ENCODE measurements at regions of chr11 and their contacts with region 1.

Region 1: DNA sequence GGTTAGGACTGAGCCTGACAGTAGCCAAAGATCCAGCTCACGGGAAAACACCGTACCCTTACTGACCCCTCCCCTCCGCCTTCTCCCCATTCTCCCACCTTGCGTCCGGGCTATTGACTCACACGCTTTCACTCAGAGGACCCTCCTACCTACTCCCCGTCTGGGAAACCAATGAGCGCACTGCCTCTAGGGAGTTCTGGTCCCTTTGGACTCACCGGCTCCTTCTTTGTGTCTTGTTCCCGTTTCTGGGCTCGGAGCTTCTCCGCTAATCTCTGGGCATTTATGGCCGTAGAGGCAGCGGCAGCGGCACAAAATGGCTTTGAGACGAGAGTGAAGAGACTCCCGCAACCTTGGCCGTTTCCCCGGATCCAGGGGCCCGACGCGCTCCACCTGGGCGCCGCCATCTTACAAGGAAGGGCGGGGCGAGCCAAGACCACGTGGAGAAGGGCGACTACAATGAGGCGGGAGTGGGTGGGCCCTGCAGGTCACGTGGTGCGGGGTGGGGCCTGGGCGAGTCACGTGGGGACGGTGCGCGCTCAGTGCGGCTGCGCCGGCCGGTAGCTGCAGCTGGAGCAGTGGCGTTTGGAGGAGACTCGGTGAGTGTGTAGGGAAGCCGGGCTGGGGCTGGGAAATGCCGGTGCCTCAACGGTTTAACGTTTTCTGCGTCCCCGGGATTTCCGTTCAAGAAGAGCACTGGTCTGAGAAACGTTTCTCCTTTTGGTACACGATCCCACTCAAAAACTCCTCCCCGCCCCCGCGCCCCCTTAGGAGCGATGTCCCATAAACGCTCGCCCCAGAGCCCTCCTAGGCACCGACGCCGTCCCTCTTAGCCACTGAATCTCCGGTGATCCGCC is at the starts of genes FAM118B and RPUSD4:
- DNase-seq: peak; percentile 97
- ATAC-seq: peak; percentile 96
- H3K4me3 ChIP-seq: peak within 1 kb of the TSS; percentile 89 to 100 (median 99)
- H3K4me3 Mint-ChIP-seq: peak within 1 kb of the TSS; percentile 99
- H3K27ac ChIP-seq: peak within 1 kb of the TSS; percentile 72 to 86
- H3K27ac Mint-ChIP-seq: peak within 1 kb of the TSS; percentile 95
- H3K4me1 ChIP-seq: peaks cover 16 to 18% of the 10 kb centered on the region in 2 donors
- H3K4me1 Mint-ChIP-seq: peaks cover 29% of the 10 kb centered on the region
- H3K27me3 ChIP-seq: no peaks in the 10 kb centered on the region
- H3K27me3 Mint-ChIP-seq: no peaks in the 10 kb centered on the region
- CTCF ChIP-seq: no peak
- total RNA-seq, gene FAM118B: 12.8 and 14.1 TPM in 2 replicates
- total RNA-seq, gene RPUSD4: 48.8 and 50.4 TPM in 2 replicates

Region 2: GRCh38 chr11:125592305-125593112 is 619.0 kb before region 1 on chr11 and contains the start of gene STT3A:
- CTCF ChIA-PET with region 1: no interaction called
- POLR2A ChIA-PET with region 1: no interaction called
- intact Hi-C with region 1: loop called (anchors 1 kb)
- DNase-seq: peak; percentile 99
- ATAC-seq: peak; percentile 92
- H3K4me3 ChIP-seq: peak within 1 kb of the TSS; percentile 72 to 97 (median 84)
- H3K4me3 Mint-ChIP-seq: peak within 1 kb of the TSS; percentile 94
- H3K27ac ChIP-seq: peak within 1 kb of the TSS; percentile 94 to 95
- H3K27ac Mint-ChIP-seq: peak within 1 kb of the TSS; percentile 97
- H3K4me1 ChIP-seq: peaks cover 27 to 28% of the 10 kb centered on the region in 2 donors
- H3K4me1 Mint-ChIP-seq: peaks cover 41% of the 10 kb centered on the region
- H3K27me3 ChIP-seq: no peaks in the 10 kb centered on the region
- H3K27me3 Mint-ChIP-seq: no peaks in the 10 kb centered on the region
- CTCF ChIP-seq: no peak
- total RNA-seq, gene STT3A: 76.1 and 78.4 TPM in 2 replicates

Region 3: DNA sequence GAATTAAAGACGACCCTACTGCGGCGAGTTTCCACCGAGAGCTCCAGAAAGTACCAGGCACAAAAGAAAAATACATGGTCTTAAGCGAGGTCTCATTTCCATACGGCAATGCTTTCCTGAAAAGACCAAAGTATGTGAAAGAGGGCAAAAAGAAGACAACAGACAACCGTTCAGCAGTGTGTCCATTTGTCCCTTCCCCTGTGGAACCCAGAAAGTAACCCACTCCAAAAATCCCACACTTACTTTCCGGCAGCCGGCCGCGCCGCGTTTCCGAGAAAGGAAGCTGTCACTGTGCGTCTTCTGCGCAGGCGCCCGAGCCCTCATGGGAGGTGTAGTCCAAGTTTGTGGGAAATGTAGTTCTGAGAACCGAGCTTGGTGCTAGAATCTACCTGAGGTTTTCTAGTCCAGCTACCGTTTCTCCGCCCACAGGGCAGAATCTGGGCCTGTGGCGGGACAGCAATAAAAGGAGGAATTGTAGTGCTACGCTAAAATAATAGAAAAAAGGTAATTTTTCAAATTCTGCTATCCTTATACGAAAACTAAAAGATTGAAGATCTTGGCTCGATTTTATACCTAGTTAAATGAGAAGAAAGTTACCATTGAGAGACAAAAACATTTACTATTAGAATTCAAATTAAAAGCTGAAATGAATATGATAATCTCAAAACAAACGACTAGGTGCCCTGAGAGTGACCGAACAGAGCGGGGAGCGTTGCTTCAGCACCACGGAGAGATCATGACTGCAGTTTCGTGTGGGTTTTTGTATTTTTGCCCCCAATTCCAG is 308.3 kb before region 1 on chr11 and contains the start of gene PUS3:
- CTCF ChIA-PET with region 1: no interaction called
- POLR2A ChIA-PET with region 1: no interaction called
- intact Hi-C with region 1: loop called (anchors 2 kb)
- DNase-seq: peak; percentile 89
- ATAC-seq: peak; percentile 96
- H3K4me3 ChIP-seq: peak within 1 kb of the TSS; percentile 67 to 98 (median 81)
- H3K4me3 Mint-ChIP-seq: peak within 1 kb of the TSS; percentile 97
- H3K27ac ChIP-seq: peak within 1 kb of the TSS; percentile 45 to 75
- H3K27ac Mint-ChIP-seq: peak within 1 kb of the TSS; percentile 82
- H3K4me1 ChIP-seq: peaks cover 23 to 26% of the 10 kb centered on the region in 2 donors
- H3K4me1 Mint-ChIP-seq: peaks cover 24% of the 10 kb centered on the region
- H3K27me3 ChIP-seq: peaks cover 0 to 25% (median 18%) of the 10 kb centered on the region in 4 experiments
- H3K27me3 Mint-ChIP-seq: peaks cover 32% of the 10 kb centered on the region
- CTCF ChIP-seq: no peak
- total RNA-seq, gene PUS3: 7.8 and 8.1 TPM in 2 replicates

Region 4: DNA sequence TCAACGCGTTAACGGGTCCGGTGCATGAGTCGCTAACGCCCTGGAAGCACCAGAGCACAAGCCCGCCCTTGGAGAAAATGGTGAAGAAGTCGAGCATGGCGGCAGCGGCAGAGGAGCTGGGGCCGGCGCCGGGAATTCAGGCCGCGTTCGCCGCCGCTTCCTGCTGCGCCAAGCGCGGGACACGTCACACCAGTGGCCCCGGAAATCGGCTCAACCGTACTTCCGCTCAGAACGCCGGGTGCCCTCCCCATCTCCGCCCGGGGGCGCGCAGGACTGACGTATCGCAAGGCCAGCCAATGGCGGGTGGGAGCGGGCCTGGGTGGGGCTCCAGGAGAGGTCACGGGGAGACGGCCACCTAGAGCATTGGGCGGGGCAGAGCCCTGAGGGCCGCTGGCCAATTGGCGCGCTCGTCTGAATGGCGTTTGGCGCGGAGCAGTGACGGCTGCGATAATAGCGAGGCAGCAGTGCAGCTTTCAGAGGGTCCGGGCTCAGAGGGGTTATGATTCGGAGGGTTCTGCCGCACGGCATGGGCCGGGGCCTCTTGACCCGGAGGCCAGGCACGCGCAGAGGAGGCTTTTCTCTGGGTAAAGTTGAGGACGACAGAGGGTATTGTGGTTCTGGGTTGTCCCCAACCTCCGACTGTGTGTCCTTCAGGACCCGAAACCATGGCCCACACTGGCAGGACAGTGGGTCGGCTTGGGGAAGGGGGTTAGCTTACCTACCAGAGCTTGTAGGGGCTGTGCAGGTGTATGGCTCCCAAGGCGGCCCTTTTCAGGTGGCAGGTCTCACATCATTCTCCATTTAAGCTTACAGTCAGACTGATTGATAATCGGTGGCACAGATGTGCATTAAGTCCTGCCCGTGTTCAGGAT is 57.5 kb after region 1 on chr11 and contains the starts of genes FOXRED1 and SRPRA:
- CTCF ChIA-PET with region 1: no interaction called
- POLR2A ChIA-PET with region 1: interaction called, 5 read pairs
- intact Hi-C with region 1: loop called (anchors 1 kb)
- DNase-seq: peak; percentile 99
- ATAC-seq: peak; percentile 99
- H3K4me3 ChIP-seq: peak within 1 kb of the TSS; percentile 83 to 98 (median 89)
- H3K4me3 Mint-ChIP-seq: peak within 1 kb of the TSS; percentile 96
- H3K27ac ChIP-seq: peak within 1 kb of the TSS; percentile 94 to 95
- H3K27ac Mint-ChIP-seq: peak within 1 kb of the TSS; percentile 93
- H3K4me1 ChIP-seq: peaks cover 14 to 20% of the 10 kb centered on the region in 2 donors
- H3K4me1 Mint-ChIP-seq: peaks cover 36% of the 10 kb centered on the region
- H3K27me3 ChIP-seq: no peaks in the 10 kb centered on the region
- H3K27me3 Mint-ChIP-seq: no peaks in the 10 kb centered on the region
- CTCF ChIP-seq: no peak
- total RNA-seq, gene FOXRED1: 44.4 and 46.0 TPM in 2 replicates
- total RNA-seq, gene SRPRA: 129 and 136 TPM in 2 replicates

Region 5: GRCh38 chr11:126303623-126304456 is 92.4 kb after region 1 on chr11 and contains the start of gene DCPS:
- CTCF ChIA-PET with region 1: no interaction called
- POLR2A ChIA-PET with region 1: no interaction called
- intact Hi-C with region 1: loop called (anchors 1 kb)
- DNase-seq: peak; percentile 89
- ATAC-seq: peak; percentile 98
- H3K4me3 ChIP-seq: peak within 1 kb of the TSS; percentile 60 to 99 (median 97)
- H3K4me3 Mint-ChIP-seq: peak within 1 kb of the TSS; percentile 88
- H3K27ac ChIP-seq: peak within 1 kb of the TSS; percentile 82 to 90
- H3K27ac Mint-ChIP-seq: peak within 1 kb of the TSS; percentile 94
- H3K4me1 ChIP-seq: peaks cover 11 to 33% of the 10 kb centered on the region in 2 donors
- H3K4me1 Mint-ChIP-seq: peaks cover 35% of the 10 kb centered on the region
- H3K27me3 ChIP-seq: no peaks in the 10 kb centered on the region
- H3K27me3 Mint-ChIP-seq: no peaks in the 10 kb centered on the region
- CTCF ChIP-seq: no peak
- total RNA-seq, gene DCPS: 21.7 and 24.5 TPM in 2 replicates